Tibial artery (tissue), 4 donors: ENCODE measurements at regions of chr13 and their contacts with region 1.

Region 1: DNA sequence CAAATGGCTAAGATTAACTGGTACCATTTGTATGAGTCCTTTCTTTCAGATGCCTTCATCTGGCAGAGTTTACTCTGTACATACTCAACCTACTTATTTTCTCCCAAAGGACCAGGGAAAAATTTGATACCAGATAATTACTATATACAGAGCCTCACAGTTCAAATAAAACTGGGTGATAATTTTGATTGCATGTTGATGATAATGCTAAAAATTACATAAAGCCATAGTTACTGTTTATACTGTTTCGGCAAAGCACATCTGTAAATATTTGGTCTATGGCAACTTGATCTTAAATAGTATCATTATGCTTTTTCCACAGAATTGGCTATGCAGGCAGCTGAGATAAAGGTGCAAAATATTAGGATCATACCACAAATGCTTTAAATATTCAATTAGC is 82.8 kb downstream of the SLITRK6 start:
- DNase-seq: no peak
- H3K4me3 ChIP-seq: no peak overlapping the region
- H3K27ac ChIP-seq: no peak overlapping the region
- H3K4me1 ChIP-seq: no peaks in the 10 kb centered on the region
- H3K27me3 ChIP-seq: no peaks in the 10 kb centered on the region
- CTCF ChIP-seq: no peak

Region 2: GRCh38 chr13:84816567-84817105 is 899.7 kb before region 1 on chr13:
- intact Hi-C with region 1: loop called (anchors 5 kb)
- DNase-seq: no peak
- H3K4me3 ChIP-seq: no peak overlapping the region
- H3K27ac ChIP-seq: no peak overlapping the region
- H3K4me1 ChIP-seq: no peaks in the 10 kb centered on the region
- H3K27me3 ChIP-seq: no peaks in the 10 kb centered on the region
- CTCF ChIP-seq: no peak

Region 3: GRCh38 chr13:85665286-85665685 is 51.1 kb before region 1 on chr13:
- intact Hi-C with region 1: no loop called
- DNase-seq: no peak
- H3K4me3 ChIP-seq: no peak overlapping the region
- H3K27ac ChIP-seq: no peak overlapping the region
- H3K4me1 ChIP-seq: no peaks in the 10 kb centered on the region
- H3K27me3 ChIP-seq: no peaks in the 10 kb centered on the region
- CTCF ChIP-seq: no peak

Region 4: DNA sequence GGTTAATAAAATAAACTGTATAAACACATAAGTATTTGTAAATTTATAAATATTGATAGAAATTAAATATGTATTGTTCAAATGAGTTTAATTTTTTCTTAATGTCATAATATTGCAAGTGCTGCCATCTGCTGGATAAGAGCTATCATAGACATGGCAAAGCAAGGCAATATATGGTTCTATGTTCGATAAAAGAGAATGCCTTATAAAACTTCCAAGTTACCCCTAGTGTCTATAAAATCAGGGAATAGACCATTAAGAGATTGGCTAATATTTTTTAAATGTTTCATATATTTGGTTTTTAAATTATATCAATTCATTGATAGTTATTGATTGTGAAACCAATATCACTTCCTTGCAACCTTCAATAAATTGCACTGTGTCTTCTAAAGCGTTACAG is 111.8 kb after region 1 on chr13:
- intact Hi-C with region 1: no loop called
- DNase-seq: no peak
- H3K4me3 ChIP-seq: no peak overlapping the region
- H3K27ac ChIP-seq: no peak overlapping the region
- H3K4me1 ChIP-seq: no peaks in the 10 kb centered on the region
- H3K27me3 ChIP-seq: no peaks in the 10 kb centered on the region
- CTCF ChIP-seq: peak in 1 of 2 experiments; percentile 36